PC-9 (cell line): ENCODE measurements at regions of chr7 and their contacts with region 1.

Region 1: DNA sequence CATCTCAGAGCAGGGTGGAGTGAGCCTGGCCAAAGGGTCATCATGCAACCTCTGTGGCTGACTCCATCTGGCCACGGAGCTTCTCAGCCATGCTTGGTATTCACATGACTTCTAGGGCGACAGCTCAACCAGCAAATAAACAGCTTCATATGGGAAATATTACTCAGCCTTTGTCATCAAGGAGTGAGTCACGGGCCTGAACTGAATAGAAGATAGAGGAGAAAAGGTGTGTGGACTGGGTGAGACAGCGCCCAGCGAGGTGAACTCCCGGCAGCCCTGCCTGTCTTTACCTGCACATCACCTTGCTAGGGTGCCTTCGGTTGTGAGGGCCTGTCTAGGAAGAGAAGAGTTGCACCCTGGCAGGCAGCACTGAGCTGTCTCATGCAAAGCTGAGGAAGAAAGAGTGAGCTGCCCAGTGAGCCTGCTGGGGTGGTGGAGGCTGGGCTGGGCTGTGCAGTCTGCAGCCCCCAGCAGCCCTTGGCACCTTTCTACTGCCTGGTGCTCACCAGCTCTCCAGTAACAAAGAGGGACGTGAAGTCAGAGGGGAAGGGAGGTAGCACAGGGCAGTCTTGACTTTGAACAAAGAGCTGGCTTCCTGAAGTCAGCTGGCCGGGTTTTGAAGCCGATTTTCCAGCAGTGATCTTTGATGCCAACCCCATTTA is 114.2 kb downstream of the EGFR start:
- DNase-seq: peak; percentile 98 to 100
- H3K4me3 ChIP-seq: peak overlapping the region; percentile 39
- H3K27ac ChIP-seq: peak overlapping the region; percentile 92
- H3K4me1 ChIP-seq: peaks cover 77% of the 10 kb centered on the region
- H3K27me3 ChIP-seq: no peaks in the 10 kb centered on the region
- CTCF ChIP-seq: no peak

Region 2: DNA sequence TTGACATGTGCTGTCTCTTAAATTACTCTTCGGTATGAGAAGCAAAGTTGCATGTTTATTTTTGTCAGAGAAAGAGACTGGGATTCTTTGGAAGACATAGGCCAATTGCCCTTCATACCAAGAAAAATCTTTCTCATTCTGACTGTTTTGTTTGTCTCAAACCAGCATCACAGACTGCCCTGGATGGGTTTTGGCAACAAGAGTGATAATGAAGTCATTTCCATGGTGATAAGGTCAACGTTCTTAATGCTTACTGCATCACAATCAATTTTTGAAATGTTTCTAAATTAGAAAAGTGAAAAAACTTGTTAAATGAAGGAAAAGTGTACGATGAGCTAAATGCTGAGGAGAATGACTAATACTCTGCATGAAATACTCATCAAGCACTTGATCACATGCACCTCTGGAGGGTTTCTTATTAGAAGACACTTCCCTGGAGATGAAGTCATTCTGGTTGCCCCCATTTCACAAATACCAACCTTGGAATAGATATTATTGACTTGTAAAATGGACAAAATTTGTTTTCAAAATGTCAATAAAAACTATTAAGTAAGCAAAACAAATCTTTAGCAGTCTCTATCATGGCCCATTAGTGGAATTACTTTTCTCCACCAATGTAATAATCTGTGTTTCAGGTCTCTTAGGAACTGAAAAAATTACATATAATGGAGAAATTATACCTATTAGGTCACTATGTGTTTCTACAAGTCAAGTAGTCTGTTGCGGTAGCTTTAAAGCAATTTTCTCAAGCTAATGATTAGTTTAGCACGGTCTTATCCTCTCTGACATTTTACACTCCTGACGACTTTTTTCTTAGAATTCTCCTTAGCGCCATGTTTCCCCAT is 354.1 kb before region 1 on chr7:
- CTCF ChIA-PET with region 1: interaction called, 13 read pairs
- POLR2A ChIA-PET with region 1: interaction called, 3 read pairs
- intact Hi-C with region 1: no loop called
- DNase-seq: no peak
- H3K4me3 ChIP-seq: no peak overlapping the region
- H3K27ac ChIP-seq: no peak overlapping the region
- H3K4me1 ChIP-seq: peaks cover 1% of the 10 kb centered on the region; the same call in 1 of the 2 replicates
- H3K27me3 ChIP-seq: no peaks in the 10 kb centered on the region
- CTCF ChIP-seq: no peak

Region 3: DNA sequence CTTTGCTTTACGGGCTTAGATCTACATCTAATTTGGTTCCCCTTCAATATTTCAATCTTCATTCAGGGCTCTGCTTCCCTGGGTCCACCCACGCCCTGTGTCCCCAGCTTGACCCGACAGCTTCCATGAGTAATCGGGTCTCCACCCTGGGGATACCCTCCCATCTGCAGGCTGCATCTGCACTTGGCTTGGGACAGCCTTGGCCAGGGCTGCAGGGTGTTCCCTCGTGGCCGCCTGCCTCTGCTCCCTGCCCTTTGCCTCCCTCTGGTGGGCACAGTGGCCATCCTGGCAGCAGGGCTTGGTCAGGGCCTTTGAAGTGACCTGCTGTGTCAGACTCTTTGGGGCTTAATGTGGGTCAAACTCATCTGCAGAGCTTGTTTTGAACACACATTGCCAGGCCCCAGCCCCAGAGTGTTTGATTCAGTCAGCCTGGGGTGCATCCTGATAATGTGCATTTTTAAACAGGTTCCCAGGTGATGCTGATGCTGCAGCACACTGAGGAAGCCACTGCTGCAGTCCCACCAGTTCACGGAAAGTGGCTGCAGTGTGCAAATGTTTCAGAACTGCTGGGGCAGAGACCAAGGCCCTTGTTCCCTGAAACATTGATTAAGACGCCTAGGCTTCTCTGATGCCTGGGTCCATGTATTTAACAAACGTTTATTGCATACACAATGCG is 293.3 kb before region 1 on chr7:
- CTCF ChIA-PET with region 1: interaction called, 5 read pairs
- POLR2A ChIA-PET with region 1: no interaction called
- intact Hi-C with region 1: loop called (anchors 2 kb)
- DNase-seq: peak; percentile 91 to 95
- H3K4me3 ChIP-seq: 0 out of 2 replicates have a peak overlapping the region, but pooled peaks have one; percentile 2
- H3K27ac ChIP-seq: peak overlapping the region; percentile 51
- H3K4me1 ChIP-seq: peaks cover 48% of the 10 kb centered on the region
- H3K27me3 ChIP-seq: no peaks in the 10 kb centered on the region
- CTCF ChIP-seq: peak; percentile 100

Region 4: GRCh38 chr7:54985405-54986330 is 147.4 kb before region 1 on chr7:
- CTCF ChIA-PET with region 1: no interaction called
- POLR2A ChIA-PET with region 1: interaction called, 13 read pairs
- intact Hi-C with region 1: no loop called
- DNase-seq: peak; percentile 75 to 100
- H3K4me3 ChIP-seq: peak overlapping the region; percentile 38; the same call in 1 of the 2 replicates
- H3K27ac ChIP-seq: peak overlapping the region; percentile 89
- H3K4me1 ChIP-seq: peaks cover 51% of the 10 kb centered on the region
- H3K27me3 ChIP-seq: no peaks in the 10 kb centered on the region
- CTCF ChIP-seq: no peak

Region 5: DNA sequence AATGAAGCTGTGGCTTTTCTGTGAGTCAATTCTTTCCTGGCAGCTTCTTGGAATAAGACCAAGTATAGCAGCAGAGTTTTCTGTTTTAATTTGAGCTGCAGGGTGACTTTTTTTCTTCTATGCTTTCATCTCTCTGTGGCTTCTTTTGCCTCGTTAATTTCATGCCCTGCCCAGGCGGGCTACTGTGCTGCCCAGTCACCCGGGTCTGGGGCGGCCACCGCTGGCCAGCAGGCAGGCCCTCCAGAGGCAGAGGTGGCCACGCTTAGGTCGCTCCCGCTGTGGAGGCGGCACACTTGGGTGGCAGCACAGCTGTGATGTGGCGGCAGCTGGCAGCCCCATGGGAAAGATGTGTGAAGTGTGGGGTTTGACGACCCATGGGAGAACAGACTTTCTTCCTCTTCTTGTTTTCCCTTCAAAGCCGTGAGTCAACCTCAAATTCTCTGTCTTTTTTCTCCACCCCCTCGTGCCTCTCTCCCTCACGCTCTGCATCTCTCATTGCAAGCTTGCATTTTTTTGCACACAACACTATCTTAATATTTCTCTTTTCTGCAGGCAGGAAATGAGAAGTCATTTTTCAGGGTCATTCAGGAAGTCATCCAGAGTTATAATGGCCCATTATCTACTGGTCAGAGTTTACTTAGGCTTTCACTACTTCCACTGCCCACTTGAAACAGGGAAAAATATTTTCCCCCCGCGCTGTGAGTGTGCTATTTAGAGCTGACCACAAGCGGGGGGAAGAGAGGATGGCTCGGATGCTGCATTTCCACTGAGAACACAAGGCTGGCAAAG is 46.4 kb before region 1 on chr7:
- CTCF ChIA-PET with region 1: interaction called, 7 read pairs
- POLR2A ChIA-PET with region 1: interaction called, 11 read pairs
- intact Hi-C with region 1: loop called (anchors 1 kb)
- DNase-seq: peak; percentile 65 to 87
- H3K4me3 ChIP-seq: no peak overlapping the region
- H3K27ac ChIP-seq: peak overlapping the region; percentile 25
- H3K4me1 ChIP-seq: peaks cover 19% of the 10 kb centered on the region
- H3K27me3 ChIP-seq: no peaks in the 10 kb centered on the region
- CTCF ChIP-seq: no peak

Region 6: DNA sequence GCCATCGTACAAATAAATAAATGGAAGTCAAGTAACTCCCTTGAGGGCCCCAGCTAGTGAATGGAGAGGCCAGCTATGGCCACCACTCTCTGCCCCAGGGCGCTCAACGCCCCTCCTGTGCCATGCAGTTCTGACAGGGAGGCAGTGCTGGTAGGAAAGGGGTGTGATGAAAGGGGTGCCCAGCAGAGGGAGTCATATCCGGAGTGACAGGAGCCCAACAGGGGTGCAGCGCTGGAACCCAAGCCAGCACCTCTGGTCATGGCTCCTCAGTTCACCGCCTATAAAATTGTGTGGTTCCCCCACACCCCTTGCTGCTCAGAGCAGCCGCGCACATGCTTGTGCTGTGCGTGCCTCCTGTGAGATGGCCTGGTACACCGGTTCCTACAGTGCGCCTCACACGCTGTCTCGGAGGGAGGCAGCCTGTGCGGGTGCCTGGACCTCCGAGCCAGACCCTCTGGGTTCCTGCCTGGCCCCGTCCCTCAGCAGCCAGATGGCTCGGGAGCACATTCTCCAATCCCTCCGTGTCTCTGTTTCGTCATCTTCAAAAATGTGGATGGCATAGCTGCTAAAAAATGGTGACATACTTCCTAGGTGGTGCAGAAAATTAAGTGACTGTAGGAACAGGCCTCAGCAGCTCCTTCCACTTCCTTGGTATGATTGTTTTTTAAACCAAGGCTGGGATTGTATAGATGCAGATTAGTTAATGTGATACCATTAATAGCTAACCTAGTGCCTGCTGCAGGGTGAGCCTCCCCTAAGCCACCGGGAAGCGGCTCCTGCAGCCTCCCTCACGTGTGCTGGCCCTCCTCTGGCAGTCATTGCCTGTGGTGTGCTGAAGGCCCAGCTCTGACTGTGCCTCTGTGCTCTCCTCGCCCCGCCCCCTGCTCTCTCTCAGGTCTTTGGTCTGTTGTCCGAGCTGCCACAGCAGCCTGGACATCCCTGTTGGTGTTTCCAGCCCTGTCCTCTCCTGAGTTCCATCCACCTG is 11.6 kb after region 1 on chr7:
- CTCF ChIA-PET with region 1: no interaction called
- POLR2A ChIA-PET with region 1: interaction called, 12 read pairs
- intact Hi-C with region 1: no loop called
- DNase-seq: peak in 1 of 2 experiments; percentile 29
- H3K4me3 ChIP-seq: no peak overlapping the region
- H3K27ac ChIP-seq: no peak overlapping the region
- H3K4me1 ChIP-seq: no peaks in the 10 kb centered on the region
- H3K27me3 ChIP-seq: no peaks in the 10 kb centered on the region
- CTCF ChIP-seq: peak; percentile 60

Region 7: GRCh38 chr7:55255496-55256435 is 122.7 kb after region 1 on chr7:
- CTCF ChIA-PET with region 1: interaction called, 6 read pairs
- POLR2A ChIA-PET with region 1: no interaction called
- intact Hi-C with region 1: loop called (anchors 1 kb)
- DNase-seq: peak; percentile 81 to 96
- H3K4me3 ChIP-seq: peak overlapping the region; percentile 64
- H3K27ac ChIP-seq: no peak overlapping the region
- H3K4me1 ChIP-seq: peaks cover 5% of the 10 kb centered on the region
- H3K27me3 ChIP-seq: no peaks in the 10 kb centered on the region
- CTCF ChIP-seq: peak; percentile 99

Region 8: GRCh38 chr7:55977831-55978230 is 844.8 kb after region 1 on chr7:
- CTCF ChIA-PET with region 1: no interaction called
- POLR2A ChIA-PET with region 1: no interaction called
- intact Hi-C with region 1: no loop called
- DNase-seq: no peak
- H3K4me3 ChIP-seq: no peak overlapping the region
- H3K27ac ChIP-seq: no peak overlapping the region
- H3K4me1 ChIP-seq: 0 out of 2 replicates have a peak, but pooled peaks cover 3% of the 10 kb centered on the region
- H3K27me3 ChIP-seq: no peaks in the 10 kb centered on the region
- CTCF ChIP-seq: no peak